Activated CD8-positive, alpha-beta T cell treated with anti-CD3 and anti-CD28 coated beads for 36 hours (primary cell): ENCODE measurements at regions of chr20 and their contacts with region 1.

Region 1: GRCh38 chr20:47205577-47206498 is 150.7 kb downstream of the ZMYND8 start:
- DNase-seq: peak; percentile 80
- ATAC-seq: peak; percentile 90
- H3K4me3 Mint-ChIP-seq: no peak overlapping the region
- H3K27ac Mint-ChIP-seq: no peak overlapping the region
- H3K4me1 Mint-ChIP-seq: peaks cover 4% of the 10 kb centered on the region
- H3K27me3 Mint-ChIP-seq: no peaks in the 10 kb centered on the region
- CTCF ChIP-seq: peak; percentile 81

Region 2: GRCh38 chr20:47220161-47220582 is 14.3 kb after region 1 on chr20:
- CTCF ChIA-PET with region 1: interaction called, 16 read pairs
- POLR2A ChIA-PET with region 1: interaction called, 5 read pairs
- intact Hi-C with region 1: no loop called
- DNase-seq: peak; percentile 69
- ATAC-seq: peak; percentile 69
- H3K4me3 Mint-ChIP-seq: no peak overlapping the region
- H3K27ac Mint-ChIP-seq: no peak overlapping the region
- H3K4me1 Mint-ChIP-seq: no peaks in the 10 kb centered on the region
- H3K27me3 Mint-ChIP-seq: no peaks in the 10 kb centered on the region
- CTCF ChIP-seq: peak; percentile 68

Region 3: GRCh38 chr20:47290008-47290407 is 84.2 kb after region 1 on chr20:
- CTCF ChIA-PET with region 1: no interaction called
- POLR2A ChIA-PET with region 1: no interaction called
- intact Hi-C with region 1: no loop called
- DNase-seq: no peak
- ATAC-seq: no peak
- H3K4me3 Mint-ChIP-seq: no peak overlapping the region
- H3K27ac Mint-ChIP-seq: no peak overlapping the region
- H3K4me1 Mint-ChIP-seq: peaks cover 13% of the 10 kb centered on the region
- H3K27me3 Mint-ChIP-seq: no peaks in the 10 kb centered on the region
- CTCF ChIP-seq: no peak